ENCODE measurements at regions of chr5 and their contacts with region 1.

Region 1: DNA sequence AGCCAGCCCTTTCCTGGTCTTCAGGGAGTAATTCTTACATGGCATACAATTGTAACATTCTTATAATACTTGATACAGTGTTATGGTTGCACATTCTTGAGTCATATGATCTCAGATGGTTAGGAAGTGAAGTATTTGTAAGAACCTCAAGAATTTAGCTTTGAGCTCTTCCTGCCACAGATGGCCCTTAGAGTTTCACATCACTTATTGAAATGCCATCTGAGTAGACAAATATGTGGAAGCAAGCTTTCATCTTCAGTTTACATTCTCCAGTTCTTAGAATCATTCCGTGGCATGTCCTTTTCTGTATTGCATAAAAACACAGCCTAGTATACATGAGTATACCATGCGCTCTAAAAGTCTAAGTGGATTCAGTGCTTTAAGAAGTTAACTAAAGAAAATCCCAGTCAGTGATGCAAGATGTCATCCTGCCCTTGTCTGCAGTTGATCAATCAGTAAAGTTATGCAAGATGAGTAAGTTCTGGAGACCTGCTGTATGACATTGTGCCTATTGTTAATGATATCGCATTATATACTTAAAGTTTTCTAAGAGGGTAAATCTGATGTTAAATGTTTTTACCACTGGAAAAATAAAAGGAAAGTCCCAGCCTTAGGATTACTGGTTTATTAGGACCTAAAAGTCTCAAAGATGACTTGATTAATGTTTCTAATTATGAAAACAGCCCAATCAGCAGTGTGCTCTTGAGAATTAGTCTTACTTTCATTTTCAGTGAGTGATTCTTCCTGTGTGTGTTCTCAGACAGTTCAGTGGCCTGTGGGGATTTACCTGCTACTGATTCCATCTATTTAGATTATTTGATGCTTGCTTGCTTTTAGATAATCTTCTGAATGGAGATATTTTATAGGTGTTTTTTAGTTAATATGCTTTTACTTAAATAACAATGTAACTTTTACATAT is 29.4 kb downstream of the RHOBTB3 start:
- DNase-seq: peak; percentile 64
- CTCF ChIP-seq: no peak

Region 2: GRCh38 chr5:95773335-95774059 is 13.0 kb after region 1 on chr5:
- CTCF ChIA-PET with region 1: interaction called, 16 read pairs
- POLR2A ChIA-PET with region 1: no interaction called
- DNase-seq: no peak
- CTCF ChIP-seq: no peak